ENCODE measurements at regions of chr20 and their contacts with region 1.

Region 1: GRCh38 chr20:35619196-35620095 is 3.8 kb downstream of the SPAG4 start:
- DNase-seq: peak; percentile 67 to 86
- H3K4me3 ChIP-seq: peak overlapping the region; percentile 57 to 70
- H3K27ac ChIP-seq: peak overlapping the region; percentile 46 to 88
- H3K4me1 ChIP-seq: peaks cover 0 to 39% (median 32%) of the 10 kb centered on the region in 4 donors
- H3K27me3 ChIP-seq: no peaks in the 10 kb centered on the region
- CTCF ChIP-seq: no peak

Region 2: DNA sequence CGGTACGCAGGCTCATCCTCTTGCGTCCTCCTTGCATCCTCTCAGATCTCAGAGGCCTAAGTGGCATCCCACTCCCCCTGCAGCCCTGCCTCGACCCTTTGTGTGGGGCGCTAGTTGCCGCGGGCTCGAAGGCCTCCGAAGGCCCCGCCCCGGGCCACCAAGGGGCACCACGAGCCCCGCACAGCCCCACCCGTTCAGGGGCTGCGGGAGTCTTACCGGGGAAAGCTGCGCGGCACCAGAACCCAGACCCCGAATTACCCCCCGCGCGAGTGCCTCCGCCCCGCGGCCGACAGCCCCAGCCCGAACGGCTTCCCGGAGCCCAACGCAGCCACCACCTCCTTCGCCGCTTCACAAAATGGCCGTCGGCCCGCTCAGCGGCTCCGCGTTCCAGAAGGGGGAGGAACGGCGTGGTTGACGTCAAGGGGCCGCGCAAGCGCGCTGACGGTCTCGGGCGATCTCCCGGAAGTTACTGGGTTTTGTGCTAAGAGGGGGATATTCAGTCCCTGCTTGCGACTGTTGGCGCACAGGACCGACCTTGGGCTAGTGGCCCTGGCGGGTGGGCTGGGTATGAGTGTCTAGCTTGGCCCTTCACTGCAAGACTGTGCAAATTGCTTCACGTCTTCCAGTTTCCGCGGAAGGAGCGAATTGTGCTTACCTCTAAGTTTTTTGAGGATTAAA is 45.2 kb after region 1 on chr20 and contains the starts of genes CPNE1 and RBM12:
- intact Hi-C with region 1: loop called (anchors 5 kb)
- DNase-seq: peak; percentile 87 to 96
- H3K4me3 ChIP-seq: peak within 1 kb of the TSS; percentile 67 to 87
- H3K27ac ChIP-seq: peak within 1 kb of the TSS; percentile 93 to 99
- H3K4me1 ChIP-seq: peaks cover 0 to 39% (median 24%) of the 10 kb centered on the region in 4 donors
- H3K27me3 ChIP-seq: no peaks in the 10 kb centered on the region
- CTCF ChIP-seq: no peak

Region 3: GRCh38 chr20:35771689-35772562 is 152.5 kb after region 1 on chr20 and contains the start of gene PHF20:
- intact Hi-C with region 1: loop called (anchors 5 kb)
- DNase-seq: peak; percentile 99 to 100
- H3K4me3 ChIP-seq: peak within 1 kb of the TSS; percentile 64 to 87
- H3K27ac ChIP-seq: peak within 1 kb of the TSS; percentile 93 to 95
- H3K4me1 ChIP-seq: peaks cover 0 to 63% (median 43%) of the 10 kb centered on the region in 4 donors
- H3K27me3 ChIP-seq: no peaks in the 10 kb centered on the region
- CTCF ChIP-seq: peak in 1 of 2 experiments; percentile 56